Activated CD4-positive, alpha-beta T cell treated with anti-CD3 and anti-CD28 coated beads for 36 hours (primary cell): ENCODE measurements at regions of chr1 and their contacts with region 1.

Region 1: DNA sequence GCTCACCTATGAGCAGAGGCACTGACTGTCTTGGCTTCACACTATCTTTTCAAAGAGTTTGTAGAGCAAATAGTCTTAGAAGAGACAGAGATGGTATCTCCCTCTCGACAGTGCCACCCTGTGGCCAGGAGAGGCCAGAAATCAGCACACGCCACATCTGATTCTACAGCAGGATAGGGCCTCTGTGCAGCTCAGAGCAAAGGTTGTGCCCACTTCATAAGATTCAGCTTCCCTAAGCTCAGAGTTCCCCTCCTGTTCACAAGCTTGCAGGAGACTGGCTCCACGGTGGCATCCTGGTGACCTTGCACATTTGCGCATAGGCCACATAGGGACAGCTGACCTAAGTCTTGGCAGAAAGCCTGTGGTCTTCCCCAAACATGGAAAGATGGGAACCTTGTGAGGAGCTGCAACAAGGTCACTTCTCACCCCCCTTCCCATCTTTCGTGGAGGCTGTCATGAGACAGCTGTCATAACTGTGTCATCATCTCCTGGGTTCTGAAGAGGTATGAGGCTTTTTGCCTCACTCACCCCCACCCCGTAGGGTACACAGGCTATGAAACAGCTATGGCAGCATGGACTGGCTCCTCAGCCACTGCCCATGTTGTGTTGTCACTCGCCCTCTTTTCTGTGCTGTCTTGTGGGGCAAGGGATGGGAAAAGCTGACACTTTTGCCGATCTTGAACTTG is 3.0 kb downstream of the ITLN2 start:
- DNase-seq: peak; percentile 85
- ATAC-seq: peak; percentile 89
- H3K4me3 Mint-ChIP-seq: no peak overlapping the region
- H3K27ac Mint-ChIP-seq: no peak overlapping the region
- H3K4me1 Mint-ChIP-seq: peaks cover 3% of the 10 kb centered on the region
- H3K27me3 Mint-ChIP-seq: no peaks in the 10 kb centered on the region

Region 2: DNA sequence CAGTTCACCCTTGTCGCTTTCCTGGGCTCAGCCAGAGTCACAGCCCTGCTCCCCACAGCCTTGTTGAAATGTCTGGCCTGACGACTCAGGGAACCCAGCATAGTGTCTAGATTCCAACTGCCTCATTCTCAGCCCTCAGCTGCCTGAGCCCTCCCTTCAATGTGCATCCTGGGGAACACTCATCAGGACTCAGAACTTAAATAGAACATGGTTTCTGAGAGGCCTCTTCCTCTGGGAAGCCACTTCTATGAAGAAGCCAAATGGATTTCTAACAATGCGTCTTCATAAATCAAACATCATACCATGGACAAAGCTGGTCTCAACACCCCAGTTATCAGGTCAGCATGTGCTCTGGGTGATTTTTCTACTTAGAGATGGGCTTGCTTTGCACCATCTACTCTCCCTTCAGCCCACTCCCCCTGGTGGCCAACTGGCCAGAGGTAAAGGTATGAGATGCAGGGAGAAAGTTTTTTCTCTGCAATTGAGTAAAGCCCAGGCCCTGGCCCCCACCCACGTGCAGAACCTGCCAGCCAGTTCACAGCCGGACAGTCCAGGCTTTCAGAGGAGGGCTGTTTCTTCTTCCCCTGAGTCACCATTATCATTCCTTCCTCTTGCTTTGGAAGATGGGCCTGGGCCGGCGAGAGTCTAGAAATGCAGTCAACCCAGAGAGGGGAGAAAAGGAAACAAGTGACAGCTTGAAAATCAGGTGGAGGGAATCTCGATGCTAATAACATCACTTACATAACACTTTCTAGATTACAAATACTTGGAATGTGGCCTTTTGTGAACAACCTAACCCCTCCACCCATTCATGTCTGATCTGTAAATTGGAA is 121.0 kb before region 1 on chr1:
- CTCF ChIA-PET with region 1: interaction called, 241 read pairs
- POLR2A ChIA-PET with region 1: interaction called, 3 read pairs
- intact Hi-C with region 1: loop called (anchors 1 kb)
- DNase-seq: peak; percentile 92
- ATAC-seq: peak; percentile 83
- H3K4me3 Mint-ChIP-seq: no peak overlapping the region
- H3K27ac Mint-ChIP-seq: peak overlapping the region; percentile 44
- H3K4me1 Mint-ChIP-seq: peaks cover 18% of the 10 kb centered on the region
- H3K27me3 Mint-ChIP-seq: no peaks in the 10 kb centered on the region

Region 3: DNA sequence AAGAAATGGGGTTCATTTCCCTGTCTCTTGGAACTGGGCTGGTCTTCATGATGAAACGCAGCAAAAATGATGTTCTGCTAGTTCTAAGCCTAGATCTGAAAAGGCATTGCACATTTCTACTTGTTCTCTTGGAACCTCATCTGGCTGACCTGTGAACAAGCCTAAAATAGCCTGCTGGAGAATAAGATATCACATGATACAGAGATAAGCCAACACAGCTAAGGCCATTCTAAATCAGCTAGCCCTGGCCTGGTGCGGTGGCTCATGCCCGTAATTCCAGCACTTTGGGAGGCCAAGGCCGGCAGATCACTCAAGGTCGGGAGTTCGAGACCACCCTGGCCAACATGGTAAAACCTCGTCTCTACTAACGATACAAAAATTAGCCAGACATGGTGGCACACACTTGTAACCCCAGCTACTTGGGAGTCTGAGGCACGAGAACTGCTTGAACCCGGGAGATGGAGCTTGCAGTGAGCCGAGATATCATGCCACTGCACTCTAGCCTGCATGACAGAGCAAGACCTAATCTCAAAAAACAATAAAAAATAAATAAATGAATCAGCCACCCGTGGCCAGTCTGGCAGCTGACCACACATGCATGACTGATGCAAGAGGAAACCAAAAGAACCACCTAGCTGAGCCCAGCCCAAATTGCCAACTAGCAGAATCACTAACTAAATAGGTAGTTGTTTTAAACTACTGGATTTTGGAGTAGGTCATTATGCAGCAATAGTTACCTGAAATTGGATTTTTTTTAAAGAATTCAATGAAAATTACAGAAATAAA is 106.9 kb before region 1 on chr1:
- CTCF ChIA-PET with region 1: interaction called, 18 read pairs
- POLR2A ChIA-PET with region 1: interaction called, 3 read pairs
- intact Hi-C with region 1: no loop called
- DNase-seq: no peak
- ATAC-seq: no peak
- H3K4me3 Mint-ChIP-seq: no peak overlapping the region
- H3K27ac Mint-ChIP-seq: no peak overlapping the region
- H3K4me1 Mint-ChIP-seq: peaks cover 2% of the 10 kb centered on the region
- H3K27me3 Mint-ChIP-seq: no peaks in the 10 kb centered on the region

Region 4: DNA sequence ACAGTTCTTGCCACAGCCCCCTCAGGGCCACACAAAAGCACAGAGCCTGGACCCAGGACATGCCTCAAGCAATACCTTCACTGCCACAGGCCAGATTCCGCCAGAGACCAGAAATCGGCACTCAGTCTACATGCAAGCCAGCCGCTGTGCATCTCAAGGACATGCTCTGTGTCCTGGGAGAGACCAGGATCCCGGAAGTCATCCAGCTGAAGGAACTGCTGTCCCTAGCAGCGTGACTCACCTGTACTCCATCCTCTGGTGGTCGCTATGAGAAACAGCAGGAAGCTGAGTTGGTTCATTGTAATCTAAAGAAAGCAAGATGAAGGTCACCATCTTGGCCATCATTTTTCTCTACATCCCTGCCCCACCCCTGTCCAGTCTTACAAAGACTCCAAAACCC is 67.0 kb before region 1 on chr1:
- CTCF ChIA-PET with region 1: interaction called, 10 read pairs
- POLR2A ChIA-PET with region 1: no interaction called
- intact Hi-C with region 1: no loop called
- DNase-seq: peak; percentile 55
- ATAC-seq: peak; percentile 94
- H3K4me3 Mint-ChIP-seq: no peak overlapping the region
- H3K27ac Mint-ChIP-seq: no peak overlapping the region
- H3K4me1 Mint-ChIP-seq: peaks cover 10% of the 10 kb centered on the region
- H3K27me3 Mint-ChIP-seq: peaks cover 2% of the 10 kb centered on the region

Region 5: GRCh38 chr1:160925652-160926241 is 25.8 kb before region 1 on chr1:
- CTCF ChIA-PET with region 1: interaction called, 10 read pairs
- POLR2A ChIA-PET with region 1: no interaction called
- intact Hi-C with region 1: no loop called
- DNase-seq: no peak
- ATAC-seq: no peak
- H3K4me3 Mint-ChIP-seq: no peak overlapping the region
- H3K27ac Mint-ChIP-seq: no peak overlapping the region
- H3K4me1 Mint-ChIP-seq: no peaks in the 10 kb centered on the region
- H3K27me3 Mint-ChIP-seq: peaks cover 8% of the 10 kb centered on the region

Region 6: GRCh38 chr1:161054805-161055204 is 103.2 kb after region 1 on chr1:
- CTCF ChIA-PET with region 1: no interaction called
- POLR2A ChIA-PET with region 1: no interaction called
- intact Hi-C with region 1: no loop called
- DNase-seq: peak; percentile 42
- ATAC-seq: peak; percentile 57
- H3K4me3 Mint-ChIP-seq: no peak overlapping the region
- H3K27ac Mint-ChIP-seq: no peak overlapping the region
- H3K4me1 Mint-ChIP-seq: peaks cover 20% of the 10 kb centered on the region
- H3K27me3 Mint-ChIP-seq: no peaks in the 10 kb centered on the region